ENCODE measurements at regions of chr3 and their contacts with region 1.

Region 1: GRCh38 chr3:98680723-98681122 is 82.4 kb upstream of the ST3GAL6 start:
- DNase-seq: no peak
- ATAC-seq: no peak
- H3K4me3 ChIP-seq: no peak overlapping the region
- H3K27ac ChIP-seq: no peak overlapping the region
- H3K4me1 ChIP-seq: peaks cover 14% of the 10 kb centered on the region
- H3K27me3 ChIP-seq: no peaks in the 10 kb centered on the region
- CTCF ChIP-seq: no peak
- EP300 ChIP-seq: no peak
- POLR2A ChIP-seq: no peak
- RAD21 ChIP-seq: no peak

Region 2: DNA sequence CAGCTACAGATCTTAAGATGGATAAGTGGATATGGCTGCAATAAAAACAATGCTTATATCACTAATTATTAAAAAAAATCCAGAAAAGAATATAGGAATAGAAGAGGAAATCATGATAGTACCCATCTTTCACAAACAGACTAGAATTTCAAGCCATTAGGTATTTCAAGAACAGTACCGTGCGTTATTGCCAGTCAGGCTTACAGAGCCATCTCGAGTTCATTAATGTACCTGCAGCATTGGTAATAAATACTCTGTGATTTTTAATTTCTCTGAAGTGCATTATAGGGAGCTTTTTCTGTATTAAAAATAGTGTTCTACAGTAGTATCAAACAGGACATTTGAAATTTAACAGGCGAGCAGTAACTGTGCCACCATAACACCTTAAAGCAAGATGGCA is 118.1 kb after region 1 on chr3:
- CTCF ChIA-PET with region 1: no interaction called
- POLR2A ChIA-PET with region 1: no interaction called
- in situ Hi-C with region 1: no loop called
- intact Hi-C with region 1: loop called (anchors 5 kb)
- DNase-seq: no peak
- ATAC-seq: no peak
- H3K4me3 ChIP-seq: no peak overlapping the region
- H3K27ac ChIP-seq: no peak overlapping the region
- H3K4me1 ChIP-seq: peaks cover 12% of the 10 kb centered on the region
- H3K27me3 ChIP-seq: no peaks in the 10 kb centered on the region
- CTCF ChIP-seq: no peak
- EP300 ChIP-seq: no peak
- POLR2A ChIP-seq: no peak
- RAD21 ChIP-seq: no peak

Measured in HepG2 (cell line).